Dendritic cell treated with granulocyte-macrophage colony-stimulating factor and Interleukin-4, amounts not matched to agents 40 ng/mL and 50 ng/mL, for 4 days (primary cell): ENCODE measurements at regions of chr5 and their contacts with region 1.

Region 1: DNA sequence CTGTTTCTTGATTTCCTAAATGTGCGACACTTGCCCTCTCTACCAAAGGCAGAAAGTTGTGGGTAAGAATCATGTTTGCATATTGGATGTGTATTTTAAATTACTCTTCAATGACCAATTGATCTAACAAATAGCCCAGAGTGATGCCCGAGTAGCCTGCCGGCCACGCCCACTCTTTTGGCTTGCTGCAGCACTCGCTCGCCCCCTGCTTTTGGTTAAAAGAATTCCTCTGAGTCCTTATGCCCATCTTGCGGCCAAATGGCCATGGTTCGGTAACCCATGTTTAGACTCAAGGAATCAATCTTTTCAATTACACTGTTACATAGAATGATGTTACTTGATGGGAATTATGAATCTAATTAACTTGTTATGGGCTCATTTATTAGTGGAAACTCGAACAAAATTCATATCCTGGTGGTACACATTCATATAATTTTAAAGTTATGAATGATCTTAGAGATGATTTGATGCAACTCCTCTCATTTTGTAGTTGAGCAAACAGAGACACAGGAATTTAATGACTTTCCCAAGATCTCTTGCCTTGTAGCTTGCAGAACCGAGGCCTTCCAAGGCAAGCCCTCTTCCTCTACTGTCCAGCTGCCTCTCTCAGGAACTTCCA is 36.5 kb downstream of the PPIC start:
- H3K4me3 Mint-ChIP-seq: no peak overlapping the region
- H3K27ac Mint-ChIP-seq: no peak overlapping the region
- H3K4me1 Mint-ChIP-seq: no peaks in the 10 kb centered on the region
- H3K27me3 Mint-ChIP-seq: no peaks in the 10 kb centered on the region

Region 2: GRCh38 chr5:122515709-122516431 is 484.2 kb before region 1 on chr5:
- intact Hi-C with region 1: loop called (anchors 1 kb)
- H3K4me3 Mint-ChIP-seq: no peak overlapping the region
- H3K27ac Mint-ChIP-seq: no peak overlapping the region
- H3K4me1 Mint-ChIP-seq: no peaks in the 10 kb centered on the region
- H3K27me3 Mint-ChIP-seq: no peaks in the 10 kb centered on the region

Region 3: DNA sequence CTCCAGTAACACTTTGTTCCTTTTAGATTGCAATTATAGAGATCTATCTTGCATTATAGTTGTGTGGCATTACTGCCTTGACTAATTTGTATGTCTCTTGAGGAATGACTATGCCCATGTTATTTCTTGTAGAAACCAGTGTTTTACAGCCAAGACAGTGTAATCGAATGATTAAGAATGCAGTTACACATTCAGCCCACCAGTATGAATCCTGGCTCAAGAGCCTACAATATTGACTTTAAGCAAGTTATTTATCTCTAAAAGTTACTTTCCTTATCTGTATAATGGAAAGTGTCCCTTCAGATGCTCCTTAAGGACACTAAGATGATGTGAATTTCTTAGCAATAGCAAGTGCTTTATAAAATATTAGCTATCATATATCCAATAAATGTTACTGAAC is 164.4 kb before region 1 on chr5:
- intact Hi-C with region 1: loop called (anchors 10 kb)
- H3K4me3 Mint-ChIP-seq: no peak overlapping the region
- H3K27ac Mint-ChIP-seq: no peak overlapping the region
- H3K4me1 Mint-ChIP-seq: peaks cover 14% of the 10 kb centered on the region
- H3K27me3 Mint-ChIP-seq: no peaks in the 10 kb centered on the region